ENCODE measurements at regions of chr16 and their contacts with region 1.

Region 1: DNA sequence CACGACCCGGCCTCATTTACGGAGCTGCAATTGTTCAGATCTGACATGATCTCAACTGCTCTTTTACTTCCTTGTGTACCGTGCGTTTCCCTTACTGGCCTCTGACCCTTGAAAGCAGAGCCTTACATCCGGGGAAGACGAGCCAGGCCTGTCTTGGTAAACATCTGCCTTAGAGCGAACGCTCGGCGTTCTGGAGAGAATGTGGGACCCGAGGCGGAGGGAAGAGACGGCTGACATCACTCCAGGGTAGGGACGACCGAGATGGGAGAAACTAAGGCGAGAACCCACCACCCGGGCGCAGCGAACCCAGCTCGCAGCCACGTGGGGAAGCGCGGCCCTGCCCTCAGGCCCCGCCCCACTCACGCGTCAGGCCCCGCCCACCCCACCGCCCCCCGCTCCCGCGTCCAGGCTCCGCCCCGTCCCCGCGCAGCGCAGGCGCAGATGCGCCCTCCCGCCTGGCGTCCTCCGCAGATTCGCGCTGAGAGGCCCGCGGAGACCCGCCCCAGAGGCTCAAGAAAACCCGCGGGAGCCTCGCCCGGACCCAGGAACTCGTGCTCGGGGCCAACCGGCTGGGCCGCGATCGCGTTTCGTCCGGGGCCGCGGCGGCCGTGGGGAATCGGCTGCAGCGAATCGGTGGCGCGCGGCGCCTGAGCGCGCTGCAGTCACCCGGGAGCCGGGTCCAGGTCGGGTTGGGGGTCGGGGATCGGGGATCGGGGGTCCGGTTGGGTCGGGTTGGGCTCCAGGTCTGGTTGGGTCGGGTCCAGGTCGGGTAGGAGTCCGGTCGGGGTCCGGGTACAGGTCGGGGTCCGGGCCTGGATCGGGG is at the start of gene TELO2:
- DNase-seq: peak; percentile 87
- ATAC-seq: peak; percentile 94
- total RNA-seq, gene TELO2: 18.8 TPM

Region 2: GRCh38 chr16:1545044-1546040 is 52.2 kb after region 1 on chr16:
- intact Hi-C with region 1: loop called (anchors 5 kb)
- DNase-seq: peak; percentile 85
- ATAC-seq: peak; percentile 83

Region 3: GRCh38 chr16:1610276-1611017 is 117.3 kb after region 1 on chr16:
- intact Hi-C with region 1: loop called (anchors 10 kb)
- DNase-seq: peak; percentile 93
- ATAC-seq: peak; percentile 84

Region 4: GRCh38 chr16:1635070-1635469 is 141.9 kb after region 1 on chr16:
- intact Hi-C with region 1: no loop called
- DNase-seq: no peak
- ATAC-seq: no peak

Region 5: GRCh38 chr16:1705688-1706385 is 212.7 kb after region 1 on chr16 and contains the start of gene MAPK8IP3:
- intact Hi-C with region 1: no loop called
- DNase-seq: peak; percentile 92
- ATAC-seq: peak; percentile 94
- total RNA-seq, gene MAPK8IP3: 61.4 TPM